Colonic mucosa (tissue), 4 donors: ENCODE measurements at regions of chr3 and their contacts with region 1.

Region 1: GRCh38 chr3:71583566-71584449 is at the start of gene FOXP1:
- DNase-seq: peak; percentile 87
- H3K4me3 ChIP-seq: peak within 1 kb of the TSS; percentile 51
- H3K27ac ChIP-seq: peak within 1 kb of the TSS; percentile 94
- H3K4me1 ChIP-seq: no peaks in the 10 kb centered on the region
- H3K27me3 ChIP-seq: no peaks in the 10 kb centered on the region
- CTCF ChIP-seq: no peak
- total RNA-seq, gene FOXP1: 127 to 128 TPM

Region 2: DNA sequence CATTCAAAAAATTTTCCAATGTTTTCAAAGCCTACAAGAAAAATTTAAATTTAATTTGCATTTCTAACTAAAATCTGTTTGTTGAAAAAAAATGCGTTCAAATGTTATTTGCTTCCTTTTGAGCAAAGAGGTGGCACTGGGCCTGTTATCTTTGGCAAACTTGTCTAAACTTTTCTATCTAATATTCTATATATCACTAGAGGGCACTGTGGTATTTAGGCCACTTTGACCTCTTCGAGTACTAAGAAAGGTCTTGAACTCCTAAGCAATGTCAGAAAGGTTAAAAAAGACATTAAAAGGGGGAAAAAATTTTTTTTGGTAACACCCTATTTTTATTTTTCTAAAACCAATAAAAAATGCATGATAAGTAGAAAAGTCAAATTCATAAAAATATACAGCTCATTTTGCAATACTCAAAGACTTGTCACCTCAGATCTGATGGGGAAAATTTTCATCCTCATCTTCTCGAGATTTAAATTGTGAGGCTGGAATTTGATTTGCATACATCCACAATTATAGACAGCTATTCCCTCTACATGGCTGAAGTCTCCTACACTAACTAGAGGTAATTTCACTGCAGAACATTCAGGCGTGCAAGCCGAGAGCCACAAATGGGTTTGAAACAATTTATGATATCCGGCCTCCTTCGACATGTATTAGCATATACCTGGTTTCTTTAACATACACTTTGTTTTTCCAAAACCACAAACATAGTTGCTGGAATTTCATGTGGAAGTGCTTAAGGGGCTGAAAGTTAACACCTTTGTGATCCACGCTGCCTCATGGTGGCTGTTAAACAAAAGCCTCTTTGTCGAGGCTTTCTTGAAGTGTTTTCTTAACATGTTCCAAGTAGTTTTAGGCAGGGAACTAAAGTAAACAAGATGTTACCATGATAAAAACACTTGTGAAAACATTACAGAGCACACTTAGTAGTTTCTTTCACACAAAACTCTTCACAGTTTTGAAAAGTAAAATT is 576.7 kb before region 1 on chr3:
- intact Hi-C with region 1: loop called (anchors 10 kb)
- DNase-seq: no peak
- H3K4me3 ChIP-seq: no peak overlapping the region
- H3K27ac ChIP-seq: peak overlapping the region; percentile 30
- H3K4me1 ChIP-seq: no peaks in the 10 kb centered on the region
- H3K27me3 ChIP-seq: no peaks in the 10 kb centered on the region
- CTCF ChIP-seq: peak; percentile 48

Region 3: GRCh38 chr3:71064288-71064955 is 519.4 kb before region 1 on chr3:
- intact Hi-C with region 1: loop called (anchors 5 kb)
- DNase-seq: peak; percentile 60
- H3K4me3 ChIP-seq: peak overlapping the region; percentile 49
- H3K27ac ChIP-seq: peak overlapping the region; percentile 95
- H3K4me1 ChIP-seq: peaks cover 6% of the 10 kb centered on the region
- H3K27me3 ChIP-seq: no peaks in the 10 kb centered on the region
- CTCF ChIP-seq: no peak

Region 4: GRCh38 chr3:71130471-71131374 is 453.1 kb before region 1 on chr3:
- intact Hi-C with region 1: loop called (anchors 5 kb)
- DNase-seq: peak; percentile 82
- H3K4me3 ChIP-seq: peak overlapping the region; percentile 39
- H3K27ac ChIP-seq: peak overlapping the region; percentile 88
- H3K4me1 ChIP-seq: peaks cover 10% of the 10 kb centered on the region
- H3K27me3 ChIP-seq: no peaks in the 10 kb centered on the region
- CTCF ChIP-seq: no peak

Region 5: DNA sequence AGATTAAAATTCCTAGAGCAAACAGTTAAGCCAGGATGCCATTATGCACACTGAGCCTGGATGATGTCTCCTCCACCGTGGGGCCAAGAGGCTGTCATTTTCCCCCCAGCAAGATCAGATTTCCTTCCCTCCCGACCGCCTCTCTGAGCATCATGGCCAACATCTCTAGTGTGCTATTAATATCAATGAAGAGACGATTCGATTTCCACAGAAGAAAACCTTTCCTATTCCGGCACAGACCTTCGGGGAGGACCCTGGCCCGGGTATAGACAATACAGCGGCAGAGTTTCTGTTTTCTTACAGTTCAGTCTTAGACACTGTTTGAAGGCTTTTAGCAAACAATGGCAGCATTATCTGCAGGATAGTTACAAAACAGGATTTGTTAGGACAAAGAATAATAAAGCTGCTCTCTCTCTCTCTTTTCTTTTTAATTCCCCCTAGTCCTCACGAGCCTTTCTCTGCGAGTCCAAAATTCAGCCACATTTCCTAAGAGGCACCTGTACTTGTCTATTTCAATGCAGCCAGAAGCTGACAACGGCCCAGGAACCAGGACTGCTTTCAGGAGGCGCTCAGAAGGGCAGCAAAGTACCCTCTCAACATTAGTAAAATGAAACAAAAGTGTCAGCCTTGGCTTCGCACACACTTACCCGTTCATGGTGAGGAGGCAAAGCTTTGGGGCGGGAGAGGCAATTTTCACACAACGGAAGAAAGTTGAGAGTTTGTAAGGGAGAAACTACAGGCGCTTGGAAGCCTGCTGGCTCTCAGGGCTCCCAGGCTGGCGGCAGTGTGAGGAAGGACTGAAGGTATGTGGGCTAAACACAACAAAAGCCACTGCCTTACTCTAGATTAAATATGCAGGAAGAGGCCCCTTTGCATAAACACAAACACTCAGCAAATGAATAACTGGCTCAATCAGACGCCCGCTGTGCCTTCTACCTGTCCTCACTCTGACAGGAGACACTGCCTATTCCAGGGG is 278.3 kb before region 1 on chr3:
- intact Hi-C with region 1: loop called (anchors 10 kb)
- DNase-seq: peak; percentile 36
- H3K4me3 ChIP-seq: peak overlapping the region; percentile 18
- H3K27ac ChIP-seq: peak overlapping the region; percentile 63
- H3K4me1 ChIP-seq: no peaks in the 10 kb centered on the region
- H3K27me3 ChIP-seq: no peaks in the 10 kb centered on the region
- CTCF ChIP-seq: no peak